ENCODE measurements at regions of chr11 and their contacts with region 1.

Region 1: DNA sequence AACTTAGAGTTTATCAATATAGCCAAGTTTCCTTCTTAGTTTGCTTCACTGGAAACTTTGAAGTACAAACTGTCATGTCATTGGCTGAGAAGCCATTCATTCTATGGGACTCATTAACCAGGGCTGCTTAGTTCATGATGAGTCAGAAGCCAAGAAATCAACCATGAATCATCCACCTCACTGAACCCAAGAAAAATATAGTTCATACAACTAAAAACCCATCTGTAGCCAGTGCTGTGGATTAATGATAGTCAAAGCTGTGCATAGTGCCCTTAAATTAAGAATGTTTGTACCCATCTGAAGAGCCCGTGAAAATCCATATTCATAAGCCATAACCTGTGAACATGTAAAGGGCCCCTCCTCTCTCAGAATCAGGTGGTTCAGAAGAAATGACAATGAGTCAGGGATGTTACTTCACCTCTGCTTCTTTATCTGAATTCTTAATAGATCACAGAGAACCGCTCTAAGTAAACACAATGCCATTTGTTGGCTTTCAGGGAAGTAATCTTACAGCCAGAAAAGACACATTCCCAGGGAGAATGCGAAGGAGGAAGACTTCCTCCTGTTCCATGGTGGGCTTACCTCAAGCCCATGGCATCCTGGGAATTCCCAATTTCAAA is 25.4 kb downstream of the MMP20 start:
- DNase-seq: no peak
- H3K4me3 Mint-ChIP-seq: no peak overlapping the region
- H3K27ac Mint-ChIP-seq: peak overlapping the region; percentile 64
- H3K4me1 Mint-ChIP-seq: peaks cover 47% of the 10 kb centered on the region
- H3K27me3 Mint-ChIP-seq: no peaks in the 10 kb centered on the region

Region 2: GRCh38 chr11:102384419-102385079 is 215.2 kb before region 1 on chr11:
- intact Hi-C with region 1: no loop called
- DNase-seq: no peak
- H3K4me3 Mint-ChIP-seq: no peak overlapping the region
- H3K27ac Mint-ChIP-seq: no peak overlapping the region
- H3K4me1 Mint-ChIP-seq: peaks cover 21% of the 10 kb centered on the region
- H3K27me3 Mint-ChIP-seq: no peaks in the 10 kb centered on the region

Region 3: GRCh38 chr11:102396708-102397563 is 202.8 kb before region 1 on chr11:
- intact Hi-C with region 1: loop called (anchors 1 kb)
- DNase-seq: no peak
- H3K4me3 Mint-ChIP-seq: peak overlapping the region; percentile 45
- H3K27ac Mint-ChIP-seq: peak overlapping the region; percentile 63
- H3K4me1 Mint-ChIP-seq: peaks cover 52% of the 10 kb centered on the region
- H3K27me3 Mint-ChIP-seq: no peaks in the 10 kb centered on the region

Region 4: GRCh38 chr11:102416976-102417375 is 182.8 kb before region 1 on chr11:
- intact Hi-C with region 1: loop called (anchors 1 kb)
- DNase-seq: no peak
- H3K4me3 Mint-ChIP-seq: peak overlapping the region; percentile 26
- H3K27ac Mint-ChIP-seq: peak overlapping the region; percentile 67
- H3K4me1 Mint-ChIP-seq: peaks cover 84% of the 10 kb centered on the region
- H3K27me3 Mint-ChIP-seq: no peaks in the 10 kb centered on the region

Region 5: GRCh38 chr11:102560555-102561011 is 39.2 kb before region 1 on chr11:
- intact Hi-C with region 1: loop called (anchors 1 kb)
- DNase-seq: no peak
- H3K4me3 Mint-ChIP-seq: peak overlapping the region; percentile 63
- H3K27ac Mint-ChIP-seq: no peak overlapping the region
- H3K4me1 Mint-ChIP-seq: peaks cover 50% of the 10 kb centered on the region
- H3K27me3 Mint-ChIP-seq: peaks cover 2% of the 10 kb centered on the region

Region 6: GRCh38 chr11:102577182-102577581 is 22.6 kb before region 1 on chr11:
- intact Hi-C with region 1: loop called (anchors 1 kb)
- DNase-seq: no peak
- H3K4me3 Mint-ChIP-seq: no peak overlapping the region
- H3K27ac Mint-ChIP-seq: peak overlapping the region; percentile 2
- H3K4me1 Mint-ChIP-seq: peaks cover 46% of the 10 kb centered on the region
- H3K27me3 Mint-ChIP-seq: no peaks in the 10 kb centered on the region

Region 7: DNA sequence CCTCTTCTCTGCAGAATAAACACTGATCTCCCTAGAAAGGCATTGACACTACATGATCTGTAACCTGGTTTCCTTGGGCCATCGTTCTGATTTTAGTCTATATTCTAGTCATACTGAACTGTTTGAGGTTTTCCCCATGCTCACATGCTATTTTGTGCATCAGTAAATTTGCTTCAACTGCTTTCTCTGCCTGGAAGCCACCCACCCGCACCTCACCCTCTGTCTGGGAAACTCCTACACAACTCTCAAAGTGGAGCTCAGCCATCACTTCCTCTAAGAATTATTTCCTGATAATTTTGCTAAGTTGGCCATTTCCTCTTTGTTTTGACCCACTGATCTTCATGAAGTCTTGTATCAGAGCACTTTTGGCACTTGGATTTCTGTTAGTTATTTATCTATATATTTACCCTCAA is 10.7 kb before region 1 on chr11:
- intact Hi-C with region 1: loop called (anchors 1 kb)
- DNase-seq: no peak
- H3K4me3 Mint-ChIP-seq: no peak overlapping the region
- H3K27ac Mint-ChIP-seq: peak overlapping the region; percentile 74
- H3K4me1 Mint-ChIP-seq: peaks cover 49% of the 10 kb centered on the region
- H3K27me3 Mint-ChIP-seq: no peaks in the 10 kb centered on the region